Activated B cell treated with CpG ODN at 0.5 μM for 24 hours (primary cell): ENCODE measurements at regions of chr7 and their contacts with region 1.

Region 1: GRCh38 chr7:140924019-140924820 is 509 bp downstream of the BRAF start:
- DNase-seq: peak; percentile 71
- ATAC-seq: peak; percentile 75
- H3K4me3 Mint-ChIP-seq: no peak overlapping the region
- H3K27ac Mint-ChIP-seq: no peak overlapping the region
- H3K4me1 Mint-ChIP-seq: peaks cover 28% of the 10 kb centered on the region
- H3K27me3 Mint-ChIP-seq: no peaks in the 10 kb centered on the region
- CTCF ChIP-seq: no peak

Region 2: GRCh38 chr7:139359366-139360209 is 1564.6 kb before region 1 on chr7 and contains the start of gene LUC7L2:
- CTCF ChIA-PET with region 1: no interaction called
- POLR2A ChIA-PET with region 1: no interaction called
- intact Hi-C with region 1: loop called (anchors 2 kb)
- DNase-seq: peak; percentile 97
- ATAC-seq: peak; percentile 78
- H3K4me3 Mint-ChIP-seq: peak within 1 kb of the TSS; percentile 98
- H3K27ac Mint-ChIP-seq: peak within 1 kb of the TSS; percentile 100
- H3K4me1 Mint-ChIP-seq: peaks cover 41% of the 10 kb centered on the region
- H3K27me3 Mint-ChIP-seq: no peaks in the 10 kb centered on the region
- CTCF ChIP-seq: no peak
- total RNA-seq, gene LUC7L2: 94.0 and 118 TPM in 2 replicates

Region 3: GRCh38 chr7:140810830-140811556 is 113.2 kb before region 1 on chr7:
- CTCF ChIA-PET with region 1: interaction called, 10 read pairs
- POLR2A ChIA-PET with region 1: interaction called, 3 read pairs
- intact Hi-C with region 1: loop called (anchors 1 kb)
- DNase-seq: peak; percentile 30
- ATAC-seq: peak; percentile 84
- H3K4me3 Mint-ChIP-seq: no peak overlapping the region
- H3K27ac Mint-ChIP-seq: peak overlapping the region; percentile 59
- H3K4me1 Mint-ChIP-seq: peaks cover 1% of the 10 kb centered on the region
- H3K27me3 Mint-ChIP-seq: no peaks in the 10 kb centered on the region
- CTCF ChIP-seq: no peak

Region 4: GRCh38 chr7:140902303-140902953 is 21.8 kb before region 1 on chr7:
- CTCF ChIA-PET with region 1: no interaction called
- POLR2A ChIA-PET with region 1: interaction called, 4 read pairs
- intact Hi-C with region 1: loop called (anchors 2 kb)
- DNase-seq: no peak
- ATAC-seq: peak; percentile 40
- H3K4me3 Mint-ChIP-seq: peak overlapping the region; percentile 56
- H3K27ac Mint-ChIP-seq: peak overlapping the region; percentile 82
- H3K4me1 Mint-ChIP-seq: peaks cover 76% of the 10 kb centered on the region
- H3K27me3 Mint-ChIP-seq: no peaks in the 10 kb centered on the region
- CTCF ChIP-seq: no peak

Region 5: GRCh38 chr7:141737834-141738591 is 813.8 kb after region 1 on chr7 and contains the start of gene SSBP1:
- CTCF ChIA-PET with region 1: no interaction called
- POLR2A ChIA-PET with region 1: interaction called, 6 read pairs
- intact Hi-C with region 1: loop called (anchors 1 kb)
- DNase-seq: peak; percentile 79
- ATAC-seq: peak; percentile 89
- H3K4me3 Mint-ChIP-seq: peak within 1 kb of the TSS; percentile 99
- H3K27ac Mint-ChIP-seq: peak within 1 kb of the TSS; percentile 98
- H3K4me1 Mint-ChIP-seq: peaks cover 40% of the 10 kb centered on the region
- H3K27me3 Mint-ChIP-seq: no peaks in the 10 kb centered on the region
- CTCF ChIP-seq: peak; percentile 80
- total RNA-seq, gene SSBP1: 122 and 146 TPM in 2 replicates